ENCODE measurements at regions of chr17 and their contacts with region 1.

Region 1: GRCh38 chr17:752002-752619 is at the start of gene GEMIN4:
- DNase-seq: peak; percentile 100
- ATAC-seq: peak; percentile 90
- H3K4me3 Mint-ChIP-seq: peak within 1 kb of the TSS; percentile 91
- H3K27ac Mint-ChIP-seq: peak within 1 kb of the TSS; percentile 94
- H3K4me1 Mint-ChIP-seq: peaks cover 31% of the 10 kb centered on the region
- H3K27me3 Mint-ChIP-seq: no peaks in the 10 kb centered on the region
- CTCF ChIP-seq: no peak
- total RNA-seq, gene GEMIN4: 30.5 and 33.3 TPM in 2 replicates

Region 2: DNA sequence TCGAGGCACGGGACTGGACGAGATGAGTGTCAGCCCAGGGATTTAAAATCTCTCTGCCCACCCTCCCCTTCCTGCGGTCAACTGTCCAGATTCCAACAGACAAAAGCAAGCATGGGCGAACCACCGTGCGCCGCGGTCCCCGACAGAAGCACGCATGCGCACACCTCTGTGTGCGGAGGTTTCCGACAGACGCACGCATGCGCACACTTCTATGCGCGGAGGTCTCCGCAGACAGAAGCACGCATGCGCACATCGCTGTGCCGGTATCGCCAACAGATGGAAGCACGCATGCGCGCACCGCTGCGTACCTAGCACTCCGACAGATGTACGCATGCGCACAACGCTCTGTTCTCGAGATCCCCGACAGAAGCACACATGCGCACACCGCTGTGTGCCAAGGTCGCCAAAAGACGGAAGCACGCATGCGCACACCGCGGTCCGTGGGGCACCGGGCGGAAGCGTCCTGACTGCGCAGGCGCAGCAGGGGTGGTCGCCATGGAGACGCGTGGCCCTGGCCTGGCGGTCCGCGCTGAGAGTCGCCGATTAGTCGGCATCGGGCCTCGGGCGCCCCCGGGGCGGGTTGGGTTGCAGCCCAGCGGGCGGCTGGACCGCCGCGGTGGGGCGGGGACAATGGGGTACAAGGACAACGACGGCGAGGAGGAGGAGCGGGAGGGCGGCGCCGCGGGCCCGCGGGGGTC is 342.1 kb before region 1 on chr17:
- CTCF ChIA-PET with region 1: interaction called, 5 read pairs
- POLR2A ChIA-PET with region 1: interaction called, 5 read pairs
- intact Hi-C with region 1: loop called (anchors 1 kb)
- DNase-seq: peak; percentile 99
- ATAC-seq: peak; percentile 84
- H3K4me3 Mint-ChIP-seq: peak overlapping the region; percentile 88
- H3K27ac Mint-ChIP-seq: peak overlapping the region; percentile 91
- H3K4me1 Mint-ChIP-seq: peaks cover 47% of the 10 kb centered on the region
- H3K27me3 Mint-ChIP-seq: no peaks in the 10 kb centered on the region
- CTCF ChIP-seq: no peak

Region 3: DNA sequence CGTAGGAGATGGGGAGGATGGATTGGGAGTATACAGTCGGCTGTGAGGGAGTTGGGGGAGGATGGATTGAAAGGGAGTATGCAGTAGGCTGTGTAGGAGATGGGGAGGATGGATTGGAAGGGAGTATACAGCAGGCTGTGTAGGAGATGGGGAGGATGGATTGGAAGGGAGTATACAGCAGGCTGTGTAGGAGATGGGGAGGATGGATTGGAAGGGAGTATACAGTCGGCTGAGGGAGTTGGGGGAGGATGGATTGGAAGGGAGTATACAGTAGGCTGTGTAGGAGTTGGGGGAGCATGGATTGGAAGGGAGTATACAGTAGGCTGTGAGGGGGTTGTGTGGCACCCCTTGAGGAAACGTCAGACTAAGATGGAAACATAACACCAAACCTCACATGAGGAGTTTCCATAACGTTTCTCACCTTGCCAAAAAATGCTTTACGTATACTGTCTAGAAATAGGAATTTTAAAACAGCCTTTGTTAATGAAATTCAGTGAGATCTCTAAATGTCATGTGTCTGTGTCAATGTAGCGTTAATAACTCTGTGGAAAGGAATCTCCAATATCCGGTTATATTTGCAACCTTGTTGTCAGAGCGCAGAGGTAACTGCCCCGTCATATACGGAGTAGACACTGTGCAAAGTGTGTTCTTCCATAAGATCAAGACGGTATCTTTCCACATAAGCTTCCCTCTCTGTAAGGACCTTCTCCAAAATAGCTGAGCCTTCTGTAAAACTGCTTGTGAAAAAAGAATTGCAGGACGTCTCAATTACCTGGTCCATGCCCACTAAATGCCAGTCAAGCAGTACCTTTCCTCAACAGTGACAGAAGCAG is 31.2 kb before region 1 on chr17:
- CTCF ChIA-PET with region 1: interaction called, 7 read pairs
- POLR2A ChIA-PET with region 1: interaction called, 24 read pairs
- intact Hi-C with region 1: no loop called
- DNase-seq: no peak
- ATAC-seq: no peak
- H3K4me3 Mint-ChIP-seq: no peak overlapping the region
- H3K27ac Mint-ChIP-seq: no peak overlapping the region
- H3K4me1 Mint-ChIP-seq: peaks cover 3% of the 10 kb centered on the region
- H3K27me3 Mint-ChIP-seq: no peaks in the 10 kb centered on the region
- CTCF ChIP-seq: no peak

Region 4: GRCh38 chr17:740240-741017 is 11.7 kb before region 1 on chr17:
- CTCF ChIA-PET with region 1: interaction called, 3 read pairs
- POLR2A ChIA-PET with region 1: interaction called, 31 read pairs
- intact Hi-C with region 1: loop called (anchors 1 kb)
- DNase-seq: peak; percentile 66
- ATAC-seq: peak; percentile 95
- H3K4me3 Mint-ChIP-seq: peak overlapping the region; percentile 76
- H3K27ac Mint-ChIP-seq: peak overlapping the region; percentile 94
- H3K4me1 Mint-ChIP-seq: peaks cover 25% of the 10 kb centered on the region
- H3K27me3 Mint-ChIP-seq: no peaks in the 10 kb centered on the region
- CTCF ChIP-seq: no peak

Region 5: GRCh38 chr17:979538-980405 is 227.7 kb after region 1 on chr17 and contains the start of gene NXN:
- CTCF ChIA-PET with region 1: no interaction called
- POLR2A ChIA-PET with region 1: interaction called, 3 read pairs
- intact Hi-C with region 1: loop called (anchors 1 kb)
- DNase-seq: peak; percentile 93
- ATAC-seq: peak; percentile 87
- H3K4me3 Mint-ChIP-seq: peak within 1 kb of the TSS; percentile 83
- H3K27ac Mint-ChIP-seq: peak within 1 kb of the TSS; percentile 61
- H3K4me1 Mint-ChIP-seq: peaks cover 19% of the 10 kb centered on the region
- H3K27me3 Mint-ChIP-seq: peaks cover 25% of the 10 kb centered on the region
- CTCF ChIP-seq: no peak
- total RNA-seq, gene NXN: 0.15 and 0.22 TPM in 2 replicates

Region 6: GRCh38 chr17:1039511-1040215 is 287.6 kb after region 1 on chr17:
- CTCF ChIA-PET with region 1: no interaction called
- POLR2A ChIA-PET with region 1: no interaction called
- intact Hi-C with region 1: no loop called
- DNase-seq: no peak
- ATAC-seq: peak; percentile 25
- H3K4me3 Mint-ChIP-seq: no peak overlapping the region
- H3K27ac Mint-ChIP-seq: no peak overlapping the region
- H3K4me1 Mint-ChIP-seq: peaks cover 7% of the 10 kb centered on the region
- H3K27me3 Mint-ChIP-seq: no peaks in the 10 kb centered on the region
- CTCF ChIP-seq: no peak